ENCODE measurements at regions of chr3 and their contacts with region 1.

Region 1: GRCh38 chr3:132535575-132536441 is 61.3 kb upstream of the ACKR4 start:
- DNase-seq: peak; percentile 65 to 74
- H3K4me3 ChIP-seq: no peak overlapping the region
- H3K27ac ChIP-seq: peak overlapping the region; percentile 34 to 43
- H3K4me1 ChIP-seq: peaks cover 0 to 8% (median 2%) of the 10 kb centered on the region in 4 donors
- H3K27me3 ChIP-seq: no peaks in the 10 kb centered on the region
- CTCF ChIP-seq: peak; percentile 57 to 72

Region 2: DNA sequence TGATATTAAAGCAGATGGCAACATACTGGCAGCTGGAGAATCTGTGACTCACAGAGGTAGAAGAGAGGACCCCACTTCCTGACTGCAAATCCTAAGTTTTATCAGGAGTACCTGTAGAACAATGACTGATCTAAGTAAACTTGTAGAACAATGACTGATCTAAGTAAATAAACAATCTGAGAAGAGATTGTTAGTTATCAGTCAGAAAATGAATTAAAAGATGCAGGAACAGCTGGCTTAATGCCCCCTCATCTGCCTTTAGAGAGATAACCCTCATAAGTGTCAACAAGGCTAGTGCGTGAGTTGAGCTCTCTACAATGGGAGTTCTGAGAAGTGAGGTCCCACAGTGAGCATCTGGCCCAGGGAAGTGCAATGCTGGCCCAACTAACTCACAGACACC is 109.2 kb after region 1 on chr3:
- intact Hi-C with region 1: loop called (anchors 2 kb)
- DNase-seq: no peak
- H3K4me3 ChIP-seq: no peak overlapping the region
- H3K27ac ChIP-seq: no peak overlapping the region
- H3K4me1 ChIP-seq: no peaks in the 10 kb centered on the region
- H3K27me3 ChIP-seq: no peaks in the 10 kb centered on the region
- CTCF ChIP-seq: no peak